Esophagus muscularis mucosa (tissue), 4 donors: ENCODE measurements at regions of chr12 and their contacts with region 1.

Region 1: GRCh38 chr12:106357549-106358395 is at the start of gene POLR3B:
- DNase-seq: peak; percentile 99
- H3K4me3 ChIP-seq: peak within 1 kb of the TSS; percentile 72 to 88 (median 78)
- H3K27ac ChIP-seq: peak within 1 kb of the TSS; percentile 89 to 96 (median 93)
- H3K4me1 ChIP-seq: peaks cover 13 to 30% (median 23%) of the 10 kb centered on the region in 4 donors
- H3K27me3 ChIP-seq: no peaks in the 10 kb centered on the region
- CTCF ChIP-seq: peak; percentile 88 to 94 (median 91)
- EP300 ChIP-seq: no peak
- POLR2A ChIP-seq: peak; percentile 73
- total RNA-seq, gene POLR3B: 4.2 to 6.1 (median 5.3) TPM

Region 2: GRCh38 chr12:106066051-106066705 is 291.6 kb before region 1 on chr12:
- intact Hi-C with region 1: no loop called
- DNase-seq: peak; percentile 68
- H3K4me3 ChIP-seq: no peak overlapping the region
- H3K27ac ChIP-seq: no peak overlapping the region
- H3K4me1 ChIP-seq: peaks cover 8 to 19% (median 15%) of the 10 kb centered on the region in 4 donors
- H3K27me3 ChIP-seq: no peaks in the 10 kb centered on the region
- CTCF ChIP-seq: no peak
- EP300 ChIP-seq: no peak
- POLR2A ChIP-seq: no peak

Region 3: DNA sequence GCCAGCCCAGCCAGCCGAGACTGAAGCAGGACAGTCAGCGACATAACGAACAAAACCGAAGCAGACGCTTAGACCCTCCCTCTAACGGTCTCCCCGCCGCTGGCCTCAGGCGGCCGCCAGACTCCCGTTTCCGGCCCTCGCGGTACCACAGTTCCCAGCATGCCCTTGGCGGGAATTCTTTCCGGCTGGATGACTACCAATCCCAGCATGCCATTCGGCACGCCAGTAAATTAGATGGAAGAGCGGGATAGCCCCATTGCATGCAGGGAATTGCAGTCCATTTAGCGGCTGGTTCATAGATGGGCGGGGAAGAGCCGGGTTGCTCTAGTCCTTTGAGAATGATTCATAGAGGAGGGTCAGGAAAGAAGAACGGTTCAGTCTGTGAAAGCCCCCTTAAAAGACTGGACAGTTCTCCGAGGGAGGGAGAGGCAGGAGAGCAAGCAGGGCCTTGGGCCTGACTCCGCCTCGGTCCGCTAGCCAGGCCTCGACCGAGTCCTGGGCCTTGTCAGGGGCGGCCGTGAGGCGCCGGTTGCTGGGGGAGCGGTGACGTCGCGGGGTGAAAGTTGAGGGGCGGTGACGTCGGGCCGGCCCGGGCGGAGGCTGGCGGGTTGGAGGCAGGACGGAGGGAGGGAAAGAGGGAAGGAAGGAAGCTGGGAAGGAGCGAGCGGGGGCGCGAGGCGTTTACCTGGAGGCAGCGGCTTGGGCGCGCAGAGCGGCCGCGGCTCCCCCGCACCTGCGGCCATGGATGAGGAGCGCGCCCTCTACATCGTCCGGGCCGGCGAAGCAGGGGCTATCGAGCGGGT is 416.4 kb after region 1 on chr12 and contains the start of gene RIC8B:
- intact Hi-C with region 1: loop called (anchors 5 kb)
- DNase-seq: peak; percentile 98
- H3K4me3 ChIP-seq: peak within 1 kb of the TSS; percentile 80 to 95 (median 88)
- H3K27ac ChIP-seq: peak within 1 kb of the TSS; percentile 91 to 97 (median 93)
- H3K4me1 ChIP-seq: peaks cover 14 to 21% (median 18%) of the 10 kb centered on the region in 4 donors
- H3K27me3 ChIP-seq: peaks cover 0 to 2% (median 0%) of the 10 kb centered on the region in 4 donors
- CTCF ChIP-seq: peak in 1 of 3 experiments; percentile 34
- EP300 ChIP-seq: no peak
- POLR2A ChIP-seq: peak; percentile 54
- total RNA-seq, gene RIC8B: 13.8 to 19.1 (median 15.3) TPM